Thyroid gland (tissue), 4 donors: ENCODE measurements at regions of chr14 and their contacts with region 1.

Region 1: GRCh38 chr14:96100161-96101029 is 61.2 kb downstream of the C14orf132 start:
- DNase-seq: peak; percentile 84 to 89
- H3K4me3 ChIP-seq: no peak overlapping the region
- H3K27ac ChIP-seq: no peak overlapping the region
- H3K4me1 ChIP-seq: peaks cover 10 to 15% of the 10 kb centered on the region in 2 donors
- H3K27me3 ChIP-seq: no peaks in the 10 kb centered on the region
- CTCF ChIP-seq: peak; percentile 68 to 98 (median 90)
- POLR2A ChIP-seq: no peak

Region 2: DNA sequence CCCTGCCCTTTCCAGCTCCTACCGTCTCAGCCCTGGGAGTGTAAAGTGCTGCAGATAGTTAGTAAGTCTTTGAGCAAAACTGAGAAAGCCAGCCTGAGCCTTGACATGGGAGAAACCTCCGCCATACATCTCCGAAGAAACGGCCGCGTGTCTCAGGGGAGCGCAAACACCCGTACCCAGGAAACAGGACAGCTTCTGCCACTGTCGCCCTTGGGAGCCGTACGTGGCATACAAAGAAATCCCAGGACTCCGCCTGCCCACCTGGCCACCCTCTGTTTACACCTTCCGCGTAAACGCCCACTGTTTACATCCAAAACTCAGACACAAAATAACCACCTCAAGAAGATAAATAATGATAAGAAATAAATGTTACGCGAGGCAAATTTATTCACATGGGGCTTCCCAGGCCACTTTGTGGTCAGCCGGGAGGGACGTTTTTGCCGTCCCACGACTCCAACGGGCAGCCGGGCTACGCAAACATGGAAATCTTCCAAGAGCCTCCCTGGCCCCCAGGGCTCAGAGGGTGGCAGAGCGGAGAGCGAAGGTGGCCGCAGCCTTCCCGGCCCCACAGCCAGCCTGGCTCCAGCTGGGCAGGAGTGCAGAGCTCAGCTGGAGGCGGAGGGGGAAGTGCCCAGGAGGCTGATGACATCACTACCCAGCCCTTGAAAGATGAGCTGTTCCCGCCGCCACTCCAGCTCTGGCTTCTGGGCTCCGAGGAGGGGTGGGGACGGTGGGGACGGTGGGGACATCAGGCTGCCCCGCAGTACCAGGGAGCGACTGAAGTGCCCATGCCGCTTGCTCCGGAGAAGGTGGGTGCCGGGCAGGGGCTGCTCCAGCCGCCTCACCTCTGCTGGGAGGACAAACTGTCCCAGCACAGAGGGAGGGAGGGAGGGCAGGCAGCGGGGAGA is 104.0 kb after region 1 on chr14 and contains the start of gene BDKRB2:
- intact Hi-C with region 1: loop called (anchors 10 kb)
- DNase-seq: peak; percentile 90 to 91
- H3K4me3 ChIP-seq: peak within 1 kb of the TSS in 1 of 3 donors; percentile 38
- H3K27ac ChIP-seq: peak within 1 kb of the TSS; percentile 83 to 93 (median 88)
- H3K4me1 ChIP-seq: peaks cover 14 to 35% of the 10 kb centered on the region in 2 donors
- H3K27me3 ChIP-seq: no peaks in the 10 kb centered on the region
- CTCF ChIP-seq: no peak
- POLR2A ChIP-seq: peak; percentile 23 to 93
- total RNA-seq, gene BDKRB2: 3.2 to 9.9 (median 5.3) TPM

Region 3: DNA sequence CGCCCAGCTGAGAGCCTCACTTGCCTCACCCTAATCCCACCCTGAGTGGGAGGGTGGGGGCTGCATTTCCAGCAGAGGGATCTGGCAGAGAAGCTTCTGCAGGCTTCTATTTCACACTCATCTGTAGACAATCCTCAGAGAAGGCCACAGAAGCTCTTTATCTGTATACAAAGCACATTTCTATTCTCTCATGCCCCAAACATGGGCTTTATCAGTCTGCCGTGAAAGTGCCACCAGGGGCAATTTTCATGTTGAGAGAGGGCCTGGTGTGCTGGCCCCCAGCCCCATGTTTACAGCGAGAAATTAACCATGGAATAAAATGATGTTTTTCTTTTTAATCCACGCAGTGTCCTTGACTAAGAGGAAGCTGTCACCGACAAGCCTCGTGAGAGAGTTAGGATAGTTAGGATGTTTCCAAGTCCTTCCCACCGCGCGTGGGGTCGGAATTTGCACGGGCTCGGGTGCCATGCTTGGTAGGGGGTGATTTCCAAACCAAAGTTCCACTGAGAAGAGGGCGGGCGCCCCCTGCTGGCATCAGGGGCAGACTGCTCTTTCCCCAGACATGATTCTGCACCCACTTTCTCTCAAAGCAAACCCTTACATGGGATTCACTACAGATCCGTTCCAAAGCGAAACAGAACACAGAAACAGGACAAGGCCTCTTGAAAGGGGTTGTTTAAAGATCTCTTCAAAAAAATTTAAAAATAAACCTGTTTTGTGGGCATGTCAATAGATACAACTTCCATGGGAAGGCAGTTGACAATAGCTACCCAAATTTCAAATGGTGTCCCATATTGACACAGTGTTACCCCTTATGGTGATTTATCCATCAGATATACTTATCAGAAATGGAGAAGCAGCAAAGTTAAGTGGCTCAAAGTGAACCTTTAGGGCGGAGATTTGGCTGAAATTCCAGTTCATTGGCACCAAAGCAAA is 175.1 kb after region 1 on chr14:
- intact Hi-C with region 1: loop called (anchors 2 kb)
- DNase-seq: peak; percentile 75 to 81
- H3K4me3 ChIP-seq: no peak overlapping the region
- H3K27ac ChIP-seq: no peak overlapping the region
- H3K4me1 ChIP-seq: peaks cover 0 to 14% of the 10 kb centered on the region in 2 donors
- H3K27me3 ChIP-seq: no peaks in the 10 kb centered on the region
- CTCF ChIP-seq: peak; percentile 80 to 97 (median 90)
- POLR2A ChIP-seq: no peak

Region 4: GRCh38 chr14:96424109-96424989 is 324.0 kb after region 1 on chr14:
- intact Hi-C with region 1: loop called (anchors 10 kb)
- DNase-seq: peak; percentile 24 to 35
- H3K4me3 ChIP-seq: peak overlapping the region in 2 of 3 donors; percentile 4 to 12
- H3K27ac ChIP-seq: no peak overlapping the region
- H3K4me1 ChIP-seq: peaks cover 5 to 6% of the 10 kb centered on the region in 2 donors
- H3K27me3 ChIP-seq: no peaks in the 10 kb centered on the region
- CTCF ChIP-seq: peak; percentile 56 to 85 (median 77)
- POLR2A ChIP-seq: no peak